Psoas muscle (tissue), 8 donors: ENCODE measurements at regions of chr11 and their contacts with region 1.

Region 1: GRCh38 chr11:117098269-117099232 is at the start of gene SIK3:
- DNase-seq: peak; percentile 95 to 97
- ATAC-seq: peak; percentile 91 to 93 (median 93)
- H3K4me3 ChIP-seq: peak within 1 kb of the TSS; percentile 89
- H3K27ac ChIP-seq: peak within 1 kb of the TSS; percentile 93
- H3K4me1 ChIP-seq: peaks cover 52% of the 10 kb centered on the region
- H3K27me3 ChIP-seq: no peaks in the 10 kb centered on the region
- CTCF ChIP-seq: peak; percentile 39
- total RNA-seq, gene SIK3: 39.8 to 47.4 (median 42.8) TPM

Region 2: DNA sequence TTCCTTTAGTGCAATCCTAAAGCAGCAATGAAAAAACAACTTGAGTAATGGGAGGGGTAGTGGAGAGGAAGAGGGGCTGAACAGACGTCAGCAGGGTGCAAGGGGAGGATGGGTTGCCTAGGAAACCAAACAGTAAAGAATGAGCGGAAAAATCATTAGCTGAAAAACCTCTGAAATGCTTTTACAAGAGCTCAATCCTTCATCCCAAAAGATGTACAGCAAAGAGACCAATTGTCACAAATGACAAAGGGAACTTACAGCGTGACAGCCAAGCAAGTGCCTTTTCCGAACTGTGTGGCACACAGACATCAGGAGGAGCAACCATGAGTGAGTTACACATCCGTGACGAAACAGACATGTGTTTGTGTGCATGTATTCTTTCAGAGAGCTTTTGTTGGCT is 105.0 kb before region 1 on chr11:
- intact Hi-C with region 1: loop called in 1 of 2 experiments (anchors 5 kb)
- DNase-seq: no peak
- ATAC-seq: no peak
- H3K4me3 ChIP-seq: no peak overlapping the region
- H3K27ac ChIP-seq: no peak overlapping the region
- H3K4me1 ChIP-seq: peaks cover 40% of the 10 kb centered on the region
- H3K27me3 ChIP-seq: no peaks in the 10 kb centered on the region
- CTCF ChIP-seq: no peak

Region 3: GRCh38 chr11:117045196-117045595 is 53.4 kb before region 1 on chr11:
- intact Hi-C with region 1: loop called in 1 of 2 experiments (anchors 5 kb)
- DNase-seq: no peak
- ATAC-seq: peak; percentile 72 to 89 (median 87)
- H3K4me3 ChIP-seq: peak overlapping the region; percentile 41
- H3K27ac ChIP-seq: peak overlapping the region; percentile 75
- H3K4me1 ChIP-seq: peaks cover 58% of the 10 kb centered on the region
- H3K27me3 ChIP-seq: no peaks in the 10 kb centered on the region
- CTCF ChIP-seq: no peak